CD4-positive, alpha-beta memory T cell (primary cell): ENCODE measurements at regions of chr16 and their contacts with region 1.

Region 1: GRCh38 chr16:50747207-50747956 is 5.5 kb downstream of the CYLD start:
- DNase-seq: peak; percentile 64 to 75 (median 70)
- H3K4me3 ChIP-seq: peak overlapping the region; percentile 26 to 48
- H3K4me3 Mint-ChIP-seq: peak overlapping the region; percentile 83 to 96 (median 90)
- H3K27ac ChIP-seq: peak overlapping the region; percentile 59
- H3K27ac Mint-ChIP-seq: peak overlapping the region; percentile 95 to 99 (median 97)
- H3K4me1 ChIP-seq: peaks cover 77% of the 10 kb centered on the region
- H3K4me1 Mint-ChIP-seq: peaks cover 37 to 83% (median 55%) of the 10 kb centered on the region in 4 donors
- H3K27me3 ChIP-seq: no peaks in the 10 kb centered on the region
- H3K27me3 Mint-ChIP-seq: no peaks in the 10 kb centered on the region

Region 2: GRCh38 chr16:50210266-50211038 is 536.9 kb before region 1 on chr16:
- CTCF ChIA-PET with region 1: interaction called, 4 read pairs
- POLR2A ChIA-PET with region 1: no interaction called
- intact Hi-C with region 1: loop called (anchors 1 kb)
- DNase-seq: peak; percentile 53 to 63 (median 56)
- H3K4me3 ChIP-seq: no peak overlapping the region
- H3K4me3 Mint-ChIP-seq: no peak overlapping the region
- H3K27ac ChIP-seq: no peak overlapping the region
- H3K27ac Mint-ChIP-seq: peak overlapping the region; percentile 17 to 91 (median 59)
- H3K4me1 ChIP-seq: peaks cover 4% of the 10 kb centered on the region
- H3K4me1 Mint-ChIP-seq: peaks cover 16 to 26% (median 26%) of the 10 kb centered on the region in 4 donors
- H3K27me3 ChIP-seq: no peaks in the 10 kb centered on the region
- H3K27me3 Mint-ChIP-seq: no peaks in the 10 kb centered on the region

Region 3: GRCh38 chr16:50368410-50369132 is 378.8 kb before region 1 on chr16 and contains the start of gene BRD7:
- CTCF ChIA-PET with region 1: interaction called, 4 read pairs
- POLR2A ChIA-PET with region 1: interaction called, 7 read pairs
- intact Hi-C with region 1: loop called (anchors 1 kb)
- DNase-seq: peak; percentile 58 to 77 (median 66)
- H3K4me3 ChIP-seq: peak within 1 kb of the TSS; percentile 57 to 59
- H3K4me3 Mint-ChIP-seq: peak within 1 kb of the TSS; percentile 89 to 96 (median 92)
- H3K27ac ChIP-seq: peak within 1 kb of the TSS; percentile 70
- H3K27ac Mint-ChIP-seq: peak within 1 kb of the TSS; percentile 83 to 99 (median 96)
- H3K4me1 ChIP-seq: peaks cover 53% of the 10 kb centered on the region
- H3K4me1 Mint-ChIP-seq: peaks cover 38 to 58% (median 46%) of the 10 kb centered on the region in 4 donors
- H3K27me3 ChIP-seq: no peaks in the 10 kb centered on the region
- H3K27me3 Mint-ChIP-seq: peaks cover 0 to 1% of the 10 kb centered on the region in 2 donors
- total RNA-seq, gene BRD7: 86.6 to 97.7 TPM

Region 4: GRCh38 chr16:50671644-50672260 is 75.6 kb before region 1 on chr16:
- CTCF ChIA-PET with region 1: interaction called, 242 read pairs
- POLR2A ChIA-PET with region 1: interaction called, 478 read pairs
- intact Hi-C with region 1: loop called (anchors 1 kb)
- DNase-seq: peak; percentile 45 to 56 (median 49)
- H3K4me3 ChIP-seq: no peak overlapping the region
- H3K4me3 Mint-ChIP-seq: peak overlapping the region in 2 of 8 donors; percentile 1 to 47
- H3K27ac ChIP-seq: no peak overlapping the region
- H3K27ac Mint-ChIP-seq: peak overlapping the region in 6 of 7 donors; percentile 39 to 96 (median 68)
- H3K4me1 ChIP-seq: peaks cover 31% of the 10 kb centered on the region
- H3K4me1 Mint-ChIP-seq: peaks cover 21 to 39% (median 29%) of the 10 kb centered on the region in 4 donors
- H3K27me3 ChIP-seq: no peaks in the 10 kb centered on the region
- H3K27me3 Mint-ChIP-seq: no peaks in the 10 kb centered on the region

Region 5: DNA sequence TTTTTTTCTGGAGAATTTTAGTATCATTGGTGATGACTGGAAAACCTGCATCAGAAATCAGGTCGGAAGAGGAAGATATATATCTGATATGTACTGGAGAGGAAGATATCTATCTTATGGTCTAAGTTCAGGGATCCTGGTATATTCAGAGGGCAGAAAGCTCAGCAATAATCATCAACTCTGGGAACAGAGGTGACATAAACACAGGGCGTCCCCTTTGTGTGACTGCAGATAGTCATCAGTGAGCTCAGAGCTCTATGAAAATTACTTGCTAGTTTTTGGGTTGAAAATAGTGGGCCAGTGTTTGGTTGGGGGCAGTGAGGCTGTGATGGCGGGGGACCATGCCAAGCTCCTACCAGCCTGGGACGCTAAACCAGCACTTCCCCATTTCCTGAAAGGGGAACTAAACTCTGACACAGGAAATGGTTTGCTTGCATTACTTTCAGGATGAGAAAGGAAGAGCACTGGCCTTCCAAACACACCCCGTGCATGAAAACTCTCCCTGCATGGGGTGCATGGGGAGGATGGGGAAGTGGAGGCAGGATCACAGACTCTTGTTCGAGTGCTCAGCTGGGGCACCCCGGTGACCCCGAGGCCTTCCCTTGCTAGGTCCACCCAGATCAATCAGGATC is 38.2 kb before region 1 on chr16:
- CTCF ChIA-PET with region 1: interaction called, 5 read pairs
- POLR2A ChIA-PET with region 1: interaction called, 20 read pairs
- intact Hi-C with region 1: no loop called
- DNase-seq: no peak
- H3K4me3 ChIP-seq: no peak overlapping the region
- H3K4me3 Mint-ChIP-seq: peak overlapping the region in 7 of 8 donors; percentile 35 to 66 (median 57)
- H3K27ac ChIP-seq: peak overlapping the region; percentile 32
- H3K27ac Mint-ChIP-seq: peak overlapping the region; percentile 71 to 92 (median 86)
- H3K4me1 ChIP-seq: peaks cover 26% of the 10 kb centered on the region
- H3K4me1 Mint-ChIP-seq: peaks cover 37 to 60% (median 48%) of the 10 kb centered on the region in 4 donors
- H3K27me3 ChIP-seq: no peaks in the 10 kb centered on the region
- H3K27me3 Mint-ChIP-seq: no peaks in the 10 kb centered on the region